ENCODE measurements at regions of chr13 and their contacts with region 1.

Region 1: DNA sequence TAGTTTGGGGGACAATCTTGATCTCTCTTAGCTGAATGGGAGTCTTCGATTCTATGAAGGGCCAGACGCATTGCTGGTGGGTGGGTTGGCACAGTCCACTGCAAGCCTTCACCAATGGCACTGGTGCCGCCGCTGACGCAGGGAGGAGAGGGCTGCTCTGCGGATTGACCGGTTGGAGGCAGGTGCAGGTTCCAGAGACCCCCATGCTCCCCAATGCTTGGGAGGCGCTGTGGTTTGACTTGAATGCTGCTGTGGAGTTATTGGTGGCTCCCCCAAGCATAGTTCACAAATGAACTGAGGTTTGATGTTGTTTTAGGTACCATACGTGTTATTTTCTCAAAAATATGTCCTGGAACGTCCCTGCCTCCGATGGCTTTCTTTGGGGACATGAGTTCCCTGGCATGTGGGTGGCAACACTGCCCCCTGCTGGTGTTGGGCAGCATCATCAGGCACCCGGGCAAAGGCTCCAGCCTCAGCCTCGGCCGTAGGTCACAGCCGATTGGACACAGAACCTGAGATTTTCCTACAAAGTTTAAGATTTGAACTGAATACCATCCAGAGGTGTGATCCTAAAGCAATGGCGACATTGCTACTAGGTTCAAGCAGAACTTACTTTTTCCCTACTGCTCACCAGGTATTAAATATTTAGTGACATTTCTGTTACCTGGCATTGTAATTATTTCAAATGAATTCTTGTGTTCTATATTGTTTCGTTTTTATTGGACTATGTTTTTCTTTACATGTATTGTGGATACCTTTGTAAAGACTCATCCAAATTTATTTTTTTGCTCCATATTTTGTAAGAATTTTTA is 95.5 kb downstream of the ANKRD10 start:
- DNase-seq: peak; percentile 59 to 78 (median 60)
- H3K4me3 ChIP-seq: no peak overlapping the region
- H3K4me3 Mint-ChIP-seq: peak overlapping the region in 2 of 7 donors; percentile 7 to 37
- H3K27ac ChIP-seq: no peak overlapping the region
- H3K27ac Mint-ChIP-seq: peak overlapping the region in 2 of 8 donors; percentile 53 to 61
- H3K4me1 ChIP-seq: no peaks in the 10 kb centered on the region
- H3K4me1 Mint-ChIP-seq: peaks cover 7 to 26% (median 13%) of the 10 kb centered on the region in 3 donors
- H3K27me3 ChIP-seq: no peaks in the 10 kb centered on the region
- H3K27me3 Mint-ChIP-seq: peaks cover 4 to 9% of the 10 kb centered on the region in 2 donors

Region 2: GRCh38 chr13:110593430-110594130 is 225.8 kb before region 1 on chr13:
- CTCF ChIA-PET with region 1: interaction called, 11 read pairs
- POLR2A ChIA-PET with region 1: no interaction called
- DNase-seq: peak in 2 of 5 donors; percentile 17 to 21
- H3K4me3 ChIP-seq: no peak overlapping the region
- H3K4me3 Mint-ChIP-seq: no peak overlapping the region
- H3K27ac ChIP-seq: no peak overlapping the region
- H3K27ac Mint-ChIP-seq: no peak overlapping the region
- H3K4me1 ChIP-seq: no peaks in the 10 kb centered on the region
- H3K4me1 Mint-ChIP-seq: peaks cover 0 to 3% (median 0%) of the 10 kb centered on the region in 3 donors
- H3K27me3 ChIP-seq: no peaks in the 10 kb centered on the region
- H3K27me3 Mint-ChIP-seq: peaks cover 0 to 9% of the 10 kb centered on the region in 2 donors

Region 3: DNA sequence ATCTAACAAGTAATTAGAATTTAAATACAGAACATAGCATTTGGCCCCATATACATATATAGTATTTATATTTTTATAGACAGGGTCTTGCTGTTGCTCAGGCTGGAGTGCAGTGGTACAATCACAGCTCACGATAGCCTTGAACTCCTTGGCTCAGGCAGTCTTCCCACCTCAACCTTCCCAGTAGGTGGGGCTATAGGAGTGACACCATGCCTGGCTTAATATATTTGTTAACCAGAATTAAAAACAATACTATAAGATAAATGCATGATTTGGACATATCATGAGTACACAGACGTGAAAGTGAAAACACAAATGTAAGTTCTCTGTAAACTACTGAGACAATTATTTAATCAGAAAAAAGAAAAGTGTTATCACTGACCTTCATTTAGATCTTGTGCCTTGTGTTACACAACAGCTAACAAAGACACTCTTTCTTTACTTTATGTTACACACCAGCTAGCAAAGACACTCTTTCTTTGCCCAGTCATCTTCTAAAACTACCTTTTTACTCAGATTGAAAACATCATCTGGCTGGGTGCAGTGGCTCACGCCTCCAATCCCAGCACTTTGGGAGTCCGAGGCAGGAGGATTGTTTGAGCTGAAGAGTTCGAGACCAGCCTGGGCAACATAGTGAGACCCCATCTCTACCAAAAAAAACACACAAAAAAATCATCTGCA is 136.1 kb before region 1 on chr13:
- CTCF ChIA-PET with region 1: interaction called, 23 read pairs
- POLR2A ChIA-PET with region 1: no interaction called
- DNase-seq: peak in 1 of 5 donors; percentile 26
- H3K4me3 ChIP-seq: no peak overlapping the region
- H3K4me3 Mint-ChIP-seq: no peak overlapping the region
- H3K27ac ChIP-seq: no peak overlapping the region
- H3K27ac Mint-ChIP-seq: peak overlapping the region in 2 of 8 donors; percentile 17 to 42
- H3K4me1 ChIP-seq: no peaks in the 10 kb centered on the region
- H3K4me1 Mint-ChIP-seq: peaks cover 0 to 7% (median 1%) of the 10 kb centered on the region in 3 donors
- H3K27me3 ChIP-seq: no peaks in the 10 kb centered on the region
- H3K27me3 Mint-ChIP-seq: no peaks in the 10 kb centered on the region

Measured in CD8-positive, alpha-beta memory T cell (primary cell).